Endothelial cell of umbilical vein (primary cell): ENCODE measurements at regions of chr9 and their contacts with region 1.

Region 1: DNA sequence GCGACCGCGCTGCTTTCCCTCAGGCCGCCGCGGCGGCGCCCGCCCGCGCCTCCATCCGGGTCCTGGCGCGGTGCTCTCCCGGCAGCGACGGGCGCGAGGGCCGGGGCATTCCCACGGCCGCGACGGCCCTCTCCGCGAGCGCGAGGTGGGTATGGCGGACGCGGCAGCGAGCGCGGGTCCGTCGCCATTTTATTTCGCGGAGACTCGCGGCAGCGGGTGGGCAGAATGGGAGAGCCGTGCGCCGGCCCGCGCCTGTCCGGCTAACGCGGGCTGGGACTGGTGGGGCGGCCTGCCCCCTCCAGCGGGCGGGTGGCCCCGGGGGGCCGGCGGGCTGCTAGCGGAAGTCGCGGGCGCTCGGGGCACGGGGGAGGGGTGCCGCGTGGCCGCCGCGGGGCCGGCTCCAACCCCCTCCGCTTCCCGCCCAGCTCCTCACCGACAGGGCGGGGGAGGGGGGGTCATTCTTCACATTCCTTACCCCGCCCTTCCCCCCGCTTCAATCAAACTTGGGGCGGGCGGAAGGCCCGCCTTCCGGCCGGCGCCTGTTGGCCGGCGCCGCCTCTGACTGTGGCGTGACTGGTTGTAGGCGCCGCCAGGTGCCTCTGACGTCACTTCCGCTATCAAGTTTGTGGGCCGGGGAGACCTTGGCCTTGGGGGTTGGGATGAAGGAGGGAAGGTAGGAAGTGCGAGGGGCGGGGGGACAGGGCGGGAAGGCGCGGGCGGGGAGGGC is 82.1 kb downstream of the PTPDC1 start:
- DNase-seq: peak; percentile 98
- H3K4me3 ChIP-seq: peak overlapping the region; percentile 66 to 83 (median 70)
- H3K27ac ChIP-seq: peak overlapping the region; percentile 100
- H3K4me1 ChIP-seq: peaks cover 29% of the 10 kb centered on the region
- H3K27me3 ChIP-seq: no peaks in the 10 kb centered on the region
- CTCF ChIP-seq: no peak
- POLR2A ChIP-seq: peak; percentile 64

Region 2: DNA sequence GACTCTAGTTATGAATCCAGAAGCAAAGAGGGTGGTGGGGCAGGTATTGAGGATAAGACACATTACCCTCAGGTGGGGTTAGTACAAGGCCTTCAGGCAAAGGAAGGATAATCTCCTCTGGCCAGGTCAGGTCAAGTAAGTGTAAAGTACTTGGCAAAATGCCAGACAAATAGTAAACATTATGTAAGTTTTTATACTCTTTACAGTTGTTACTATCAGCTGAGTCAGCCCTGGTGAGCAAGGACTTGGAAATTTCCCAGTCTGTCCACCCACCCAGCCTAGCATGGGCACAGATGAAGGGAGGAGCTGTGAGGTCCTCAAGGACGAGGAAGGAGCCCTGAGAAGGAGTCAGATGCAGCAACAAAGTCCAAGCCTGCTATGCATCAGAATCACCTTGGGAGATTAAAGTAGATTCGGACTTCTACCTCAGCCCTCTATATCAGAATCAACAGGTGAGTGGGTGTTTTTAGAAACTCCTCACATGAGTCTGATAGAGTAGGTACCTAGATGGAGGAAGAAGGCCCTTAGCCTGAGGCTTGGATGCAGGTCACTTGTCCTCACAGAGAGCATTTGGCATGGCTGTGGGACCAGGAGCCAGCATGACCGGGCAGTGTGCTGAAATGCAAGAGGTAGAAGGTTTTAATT is 161.0 kb before region 1 on chr9:
- CTCF ChIA-PET with region 1: no interaction called
- POLR2A ChIA-PET with region 1: no interaction called
- dilution Hi-C with region 1: no loop called
- intact Hi-C with region 1: no loop called
- DNase-seq: no peak
- H3K4me3 ChIP-seq: no peak overlapping the region
- H3K27ac ChIP-seq: no peak overlapping the region
- H3K4me1 ChIP-seq: no peaks in the 10 kb centered on the region
- H3K27me3 ChIP-seq: peaks cover 5 to 13% of the 10 kb centered on the region in 2 experiments
- CTCF ChIP-seq: no peak
- POLR2A ChIP-seq: no peak

Region 3: GRCh38 chr9:94030318-94031179 is 135.9 kb before region 1 on chr9:
- CTCF ChIA-PET with region 1: no interaction called
- POLR2A ChIA-PET with region 1: no interaction called
- dilution Hi-C with region 1: no loop called
- intact Hi-C with region 1: loop called (anchors 1 kb)
- DNase-seq: peak; percentile 88
- H3K4me3 ChIP-seq: peak overlapping the region; percentile 70 to 87 (median 86)
- H3K27ac ChIP-seq: peak overlapping the region; percentile 54
- H3K4me1 ChIP-seq: peaks cover 14% of the 10 kb centered on the region
- H3K27me3 ChIP-seq: no peaks in the 10 kb centered on the region
- CTCF ChIP-seq: no peak
- POLR2A ChIP-seq: peak; percentile 58

Region 4: DNA sequence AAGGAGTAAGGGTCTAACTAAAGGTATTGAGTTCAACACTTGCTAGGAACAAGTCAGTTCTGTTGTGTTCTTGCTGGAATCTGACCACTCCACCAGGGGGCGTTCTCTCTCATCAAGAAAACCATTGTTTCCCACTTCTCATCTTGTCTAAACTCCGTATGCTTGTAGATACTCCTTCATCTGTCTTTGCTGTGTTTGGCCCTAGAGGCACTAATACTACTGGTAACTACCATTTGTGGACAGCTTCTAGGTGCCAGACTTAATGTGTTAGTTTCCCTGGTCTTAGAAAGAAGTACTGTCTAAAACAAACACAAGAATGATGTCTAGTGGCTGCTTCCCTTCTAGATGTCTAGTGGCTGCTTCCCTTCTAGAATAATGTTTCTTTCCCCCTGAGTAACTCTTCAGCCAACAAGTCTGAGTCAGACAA is 100.9 kb before region 1 on chr9:
- CTCF ChIA-PET with region 1: interaction called, 11 read pairs
- POLR2A ChIA-PET with region 1: no interaction called
- dilution Hi-C with region 1: no loop called
- intact Hi-C with region 1: loop called (anchors 1 kb)
- DNase-seq: peak; percentile 89
- H3K4me3 ChIP-seq: no peak overlapping the region
- H3K27ac ChIP-seq: no peak overlapping the region
- H3K4me1 ChIP-seq: peaks cover 4% of the 10 kb centered on the region
- H3K27me3 ChIP-seq: no peaks in the 10 kb centered on the region
- CTCF ChIP-seq: peak; percentile 73 to 80
- POLR2A ChIP-seq: no peak

Region 5: GRCh38 chr9:94076557-94076956 is 89.8 kb before region 1 on chr9:
- CTCF ChIA-PET with region 1: no interaction called
- POLR2A ChIA-PET with region 1: no interaction called
- dilution Hi-C with region 1: no loop called
- intact Hi-C with region 1: loop called (anchors 2 kb)
- DNase-seq: no peak
- H3K4me3 ChIP-seq: no peak overlapping the region
- H3K27ac ChIP-seq: no peak overlapping the region
- H3K4me1 ChIP-seq: peaks cover 11% of the 10 kb centered on the region
- H3K27me3 ChIP-seq: no peaks in the 10 kb centered on the region
- CTCF ChIP-seq: no peak
- POLR2A ChIP-seq: no peak

Region 6: DNA sequence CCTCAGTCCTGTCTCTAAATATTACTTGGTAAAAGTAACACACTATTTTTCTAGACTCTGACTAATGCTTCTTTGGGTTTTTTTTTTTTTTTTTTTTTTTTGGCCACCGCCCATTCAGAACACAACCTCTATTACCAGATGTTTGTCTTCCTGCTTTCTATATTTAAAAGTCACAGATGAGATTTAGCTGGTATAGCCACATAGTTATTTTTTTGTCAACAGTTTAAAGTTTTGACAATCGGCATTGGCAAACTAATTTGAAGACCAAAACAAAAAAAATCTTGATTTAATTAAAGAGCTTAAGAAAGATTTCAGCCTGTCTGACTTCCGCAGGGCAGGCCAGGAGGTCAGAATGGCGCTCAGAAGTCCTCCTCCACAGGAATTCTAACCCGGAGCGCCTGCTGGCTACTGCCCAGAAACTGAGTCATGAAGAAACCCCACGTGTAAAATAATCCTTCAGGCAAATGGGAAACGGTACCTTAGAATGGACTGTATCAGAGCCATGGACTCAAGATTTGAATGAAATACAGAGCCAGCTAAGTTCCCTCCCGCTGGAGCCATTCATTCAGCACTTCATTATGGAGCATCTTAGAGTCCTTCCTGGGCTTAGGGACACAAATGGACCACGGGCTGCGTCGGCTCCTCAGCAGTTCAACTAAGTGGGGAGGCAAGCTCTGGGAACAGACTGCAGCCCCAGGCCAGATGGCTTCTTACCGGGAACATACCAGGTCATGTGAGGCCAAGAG is 26.6 kb before region 1 on chr9:
- CTCF ChIA-PET with region 1: interaction called, 3 read pairs
- POLR2A ChIA-PET with region 1: interaction called, 8 read pairs
- dilution Hi-C with region 1: no loop called
- intact Hi-C with region 1: loop called (anchors 1 kb)
- DNase-seq: peak; percentile 96
- H3K4me3 ChIP-seq: no peak overlapping the region
- H3K27ac ChIP-seq: peak overlapping the region; percentile 87
- H3K4me1 ChIP-seq: peaks cover 24% of the 10 kb centered on the region
- H3K27me3 ChIP-seq: no peaks in the 10 kb centered on the region
- CTCF ChIP-seq: no peak
- POLR2A ChIP-seq: no peak

Region 7: DNA sequence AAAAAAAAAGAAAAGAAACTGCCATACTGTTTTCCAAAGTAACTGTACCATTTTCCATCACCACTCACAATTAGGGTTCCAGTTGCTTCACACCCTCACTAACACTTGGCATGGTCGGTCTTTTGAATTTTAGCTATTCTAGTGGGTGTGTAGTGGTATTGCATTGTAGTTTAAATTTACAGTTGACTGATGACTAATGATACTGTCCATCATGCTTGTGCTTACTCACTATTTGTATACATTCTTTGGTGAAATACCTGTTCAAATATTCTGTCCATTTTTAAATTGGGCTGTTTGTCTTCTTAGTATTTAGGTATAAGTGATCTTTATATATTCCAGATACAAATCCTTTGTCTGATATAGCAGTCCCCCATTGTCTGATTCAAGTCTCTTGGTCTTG is 56.5 kb after region 1 on chr9:
- CTCF ChIA-PET with region 1: no interaction called
- POLR2A ChIA-PET with region 1: no interaction called
- dilution Hi-C with region 1: no loop called
- intact Hi-C with region 1: no loop called
- DNase-seq: no peak
- H3K4me3 ChIP-seq: no peak overlapping the region
- H3K27ac ChIP-seq: no peak overlapping the region
- H3K4me1 ChIP-seq: no peaks in the 10 kb centered on the region
- H3K27me3 ChIP-seq: peaks cover 2 to 3% of the 10 kb centered on the region in 2 experiments
- CTCF ChIP-seq: no peak
- POLR2A ChIP-seq: no peak

Region 8: GRCh38 chr9:94245651-94246050 is 79.3 kb after region 1 on chr9:
- CTCF ChIA-PET with region 1: no interaction called
- POLR2A ChIA-PET with region 1: no interaction called
- dilution Hi-C with region 1: no loop called
- intact Hi-C with region 1: no loop called
- DNase-seq: no peak
- H3K4me3 ChIP-seq: no peak overlapping the region
- H3K27ac ChIP-seq: no peak overlapping the region
- H3K4me1 ChIP-seq: no peaks in the 10 kb centered on the region
- H3K27me3 ChIP-seq: peaks cover 3 to 4% of the 10 kb centered on the region in 2 experiments
- CTCF ChIP-seq: no peak
- POLR2A ChIP-seq: no peak

Region 9: DNA sequence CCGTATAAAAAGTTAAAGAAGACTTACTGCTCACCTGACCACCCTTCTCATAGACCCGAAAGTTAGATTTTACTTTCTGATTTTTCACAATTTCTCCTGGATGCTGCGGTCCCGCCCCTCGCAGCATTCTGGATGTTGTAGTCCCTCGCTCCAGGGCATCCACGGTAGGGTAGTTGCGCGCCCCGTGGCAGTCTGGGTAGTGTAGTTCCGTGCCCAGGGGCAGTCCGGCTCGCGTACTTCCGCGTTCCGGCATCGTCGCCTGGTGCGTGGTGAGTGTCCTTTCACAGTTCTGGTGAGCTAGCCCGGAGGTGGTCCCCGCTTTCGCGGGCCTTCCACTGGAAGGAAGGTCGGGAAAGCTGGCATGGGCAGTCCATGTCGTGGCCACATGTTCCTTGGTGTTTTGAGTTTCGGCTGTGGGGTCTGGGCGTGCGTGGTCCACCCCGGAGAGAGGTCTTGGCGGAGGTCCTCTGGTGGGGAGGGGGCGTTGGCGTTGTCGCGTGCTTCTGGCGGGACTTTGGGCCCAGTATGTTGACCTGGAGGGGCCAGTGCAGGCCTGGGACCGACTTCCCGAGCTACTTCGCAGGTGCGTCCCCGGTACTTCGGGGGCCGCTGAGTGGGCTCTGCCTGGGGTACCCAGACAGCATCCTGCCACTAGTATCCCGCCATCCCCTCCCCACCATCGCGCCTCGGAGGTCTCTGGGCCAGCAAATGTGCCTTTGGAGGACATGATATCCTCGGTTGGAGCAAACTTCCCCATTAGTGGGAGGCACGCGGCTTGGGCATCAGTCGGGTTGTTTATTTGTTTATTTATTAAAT is 92.9 kb after region 1 on chr9 and contains the start of gene ZNF169:
- CTCF ChIA-PET with region 1: no interaction called
- POLR2A ChIA-PET with region 1: no interaction called
- dilution Hi-C with region 1: no loop called
- intact Hi-C with region 1: no loop called
- DNase-seq: peak; percentile 84
- H3K4me3 ChIP-seq: peak within 1 kb of the TSS; percentile 72 to 94 (median 77)
- H3K27ac ChIP-seq: peak within 1 kb of the TSS; percentile 41
- H3K4me1 ChIP-seq: no peaks in the 10 kb centered on the region
- H3K27me3 ChIP-seq: peaks cover 4 to 12% of the 10 kb centered on the region in 2 experiments
- CTCF ChIP-seq: no peak
- POLR2A ChIP-seq: peak; percentile 61
- total RNA-seq, gene ZNF169: 5.4 and 6.3 TPM in 2 replicates

Region 10: DNA sequence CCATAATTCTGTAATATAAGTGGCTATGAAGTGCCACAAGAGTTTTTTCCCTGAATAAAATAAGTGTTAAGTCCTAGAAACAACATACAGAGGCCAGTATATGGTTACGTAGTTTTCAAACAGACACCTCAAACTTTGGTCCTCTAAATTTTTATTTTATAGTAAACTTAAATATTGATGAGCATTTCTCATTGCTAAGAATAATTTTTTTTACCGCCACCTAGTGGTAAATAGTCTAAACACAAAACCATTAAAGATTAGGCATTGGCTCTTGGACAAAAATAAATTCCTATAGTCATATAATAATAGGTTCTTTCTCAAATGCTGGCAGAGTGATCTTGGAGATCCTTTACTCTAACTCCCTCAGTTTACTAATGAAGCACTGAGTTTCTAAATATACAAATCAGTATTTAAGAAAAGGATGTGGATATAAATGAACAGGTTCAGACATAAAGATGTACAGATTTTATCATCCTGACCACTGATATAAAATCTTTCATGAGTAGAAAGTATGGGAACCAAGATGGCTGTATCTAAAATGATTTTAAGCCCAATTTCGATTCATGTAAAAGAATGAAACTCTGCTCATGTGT is 1014.9 kb after region 1 on chr9:
- CTCF ChIA-PET with region 1: no interaction called
- POLR2A ChIA-PET with region 1: no interaction called
- dilution Hi-C with region 1: no loop called
- intact Hi-C with region 1: loop called (anchors 10 kb)
- DNase-seq: peak; percentile 38
- H3K4me3 ChIP-seq: no peak overlapping the region
- H3K27ac ChIP-seq: no peak overlapping the region
- H3K4me1 ChIP-seq: no peaks in the 10 kb centered on the region
- H3K27me3 ChIP-seq: no peaks in the 10 kb centered on the region
- CTCF ChIP-seq: peak; percentile 4 to 15
- POLR2A ChIP-seq: no peak